ENCODE measurements at regions of chr10 and their contacts with region 1.

Region 1: GRCh38 chr10:117496616-117497028 is 45.9 kb upstream of the EMX2 start:
- DNase-seq: peak; percentile 66 to 91 (median 89)
- ATAC-seq: peak; percentile 88 to 89
- H3K4me3 ChIP-seq: no peak overlapping the region
- H3K27ac ChIP-seq: no peak overlapping the region
- H3K4me1 ChIP-seq: no peaks in the 10 kb centered on the region
- H3K27me3 ChIP-seq: no peaks in the 10 kb centered on the region

Region 2: DNA sequence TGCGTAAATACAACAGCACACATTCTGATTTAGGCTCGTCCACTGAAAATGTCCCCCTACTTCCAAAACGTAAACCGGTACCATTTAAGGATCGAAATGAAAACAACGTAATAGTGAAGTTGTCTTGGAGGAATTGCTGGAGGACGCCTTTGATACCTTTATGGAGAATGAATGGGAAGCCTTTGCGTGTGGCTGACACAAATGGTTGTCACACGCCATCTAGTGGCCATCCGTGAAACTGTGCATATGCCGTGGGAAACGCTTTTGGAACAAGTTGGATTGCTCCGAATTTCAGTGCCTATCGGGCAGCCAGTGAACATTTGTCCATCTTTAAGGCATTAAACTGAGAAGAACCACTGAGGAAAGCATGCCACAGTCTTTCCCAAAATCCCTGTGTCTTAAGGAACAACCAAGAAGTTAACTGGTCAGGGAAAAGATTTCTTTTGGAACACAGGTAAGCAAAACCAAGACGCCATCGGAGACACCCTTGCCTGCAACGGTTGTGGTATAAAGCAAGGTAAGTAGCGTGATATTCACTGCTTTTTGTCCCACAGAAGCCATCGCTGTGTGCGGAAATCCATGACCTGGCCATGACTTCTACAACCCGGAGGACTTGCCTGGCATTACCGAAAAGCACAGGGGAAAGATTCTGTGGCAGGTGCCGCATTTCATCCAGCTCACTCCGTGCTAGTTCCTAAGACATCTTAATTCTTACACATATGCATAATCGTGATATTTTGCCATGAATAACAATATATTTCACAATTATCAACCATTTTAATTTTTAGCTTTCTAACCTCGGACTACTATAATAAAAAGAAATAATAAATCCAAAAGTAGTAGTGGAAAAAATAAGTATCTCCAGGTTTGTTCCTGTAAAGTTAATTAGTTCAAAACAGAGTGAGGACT is 744.9 kb after region 1 on chr10:
- intact Hi-C with region 1: loop called (anchors 2 to 5 kb)
- DNase-seq: peak; percentile 76 to 92 (median 84)
- ATAC-seq: peak; percentile 64 to 70
- H3K4me3 ChIP-seq: no peak overlapping the region
- H3K27ac ChIP-seq: no peak overlapping the region
- H3K4me1 ChIP-seq: no peaks in the 10 kb centered on the region
- H3K27me3 ChIP-seq: no peaks in the 10 kb centered on the region

Region 3: GRCh38 chr10:118423800-118424479 is 927.3 kb after region 1 on chr10:
- intact Hi-C with region 1: loop called in 1 of 4 experiments (anchors 10 kb)
- DNase-seq: peak; percentile 91 to 96 (median 91)
- ATAC-seq: peak; percentile 96 to 99
- H3K4me3 ChIP-seq: no peak overlapping the region
- H3K27ac ChIP-seq: no peak overlapping the region
- H3K4me1 ChIP-seq: no peaks in the 10 kb centered on the region
- H3K27me3 ChIP-seq: peaks cover 2% of the 10 kb centered on the region